Ascending aorta (tissue), 2 donors: ENCODE measurements at regions of chr11 and their contacts with region 1.

Region 1: GRCh38 chr11:69000831-69001242 is 12.2 kb downstream of the MRGPRF start:
- DNase-seq: peak in 1 of 2 donors; percentile 92
- H3K4me3 ChIP-seq: no peak overlapping the region
- H3K27ac ChIP-seq: peak overlapping the region; percentile 82 to 95
- H3K4me1 ChIP-seq: peaks cover 30 to 60% of the 10 kb centered on the region in 2 donors
- H3K27me3 ChIP-seq: no peaks in the 10 kb centered on the region
- CTCF ChIP-seq: peak; percentile 53 to 67 (median 66)

Region 2: DNA sequence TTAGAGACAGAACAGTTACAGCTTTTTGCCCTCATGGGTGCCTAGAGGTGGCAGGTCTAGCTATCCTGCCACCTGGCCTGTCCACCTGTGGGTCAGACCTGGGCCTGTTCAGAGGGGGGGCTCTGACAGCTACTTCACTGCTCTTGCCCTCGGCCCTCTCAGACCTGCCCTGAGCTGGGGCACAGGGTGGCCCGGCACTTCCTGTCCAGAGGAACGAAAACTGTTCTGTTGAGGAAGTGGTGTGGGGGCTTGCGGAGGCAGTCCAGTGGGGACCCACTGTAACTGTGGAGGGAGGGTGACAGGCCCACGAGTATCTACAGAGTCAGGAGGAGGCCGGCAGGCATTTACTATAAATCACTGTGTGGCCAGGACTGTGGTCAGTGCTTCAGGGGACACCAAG is 265.7 kb before region 1 on chr11:
- intact Hi-C with region 1: no loop called
- DNase-seq: no peak
- H3K4me3 ChIP-seq: no peak overlapping the region
- H3K27ac ChIP-seq: no peak overlapping the region
- H3K4me1 ChIP-seq: no peaks in the 10 kb centered on the region
- H3K27me3 ChIP-seq: no peaks in the 10 kb centered on the region
- CTCF ChIP-seq: no peak

Region 3: GRCh38 chr11:68924073-68924945 is 76.5 kb before region 1 on chr11:
- intact Hi-C with region 1: loop called (anchors 1 kb)
- DNase-seq: no peak
- H3K4me3 ChIP-seq: no peak overlapping the region
- H3K27ac ChIP-seq: peak overlapping the region; percentile 70 to 78
- H3K4me1 ChIP-seq: peaks cover 15 to 33% of the 10 kb centered on the region in 2 donors
- H3K27me3 ChIP-seq: no peaks in the 10 kb centered on the region
- CTCF ChIP-seq: no peak

Region 4: DNA sequence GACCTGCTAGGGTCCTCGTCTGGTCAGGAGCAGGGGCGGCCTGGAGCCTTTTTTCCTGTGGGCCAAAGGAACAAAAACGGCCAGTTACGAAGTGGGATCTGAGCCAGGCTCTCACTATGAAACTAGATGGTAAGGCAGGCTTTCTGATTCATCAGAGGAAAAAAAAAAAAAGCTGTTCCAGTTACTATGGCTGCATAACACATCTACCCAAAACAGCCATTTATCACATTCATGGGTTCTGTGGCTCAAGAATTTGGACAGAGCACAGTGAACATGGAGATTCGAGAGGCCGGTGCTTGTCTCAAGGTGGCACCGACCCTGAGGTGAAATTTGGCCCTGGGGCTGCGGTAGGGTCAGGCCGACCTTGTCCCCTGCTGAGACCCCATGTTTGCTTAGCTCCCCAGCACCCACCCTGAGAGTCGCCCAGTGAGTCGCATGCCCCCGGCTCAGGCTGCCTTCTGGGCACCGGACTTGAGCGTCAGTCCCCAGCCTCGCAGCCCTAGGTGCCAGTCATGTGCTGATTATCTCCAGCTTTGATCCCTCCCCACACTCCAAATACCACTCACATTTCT is 54.3 kb before region 1 on chr11:
- intact Hi-C with region 1: loop called (anchors 2 kb)
- DNase-seq: peak in 1 of 2 donors; percentile 82
- H3K4me3 ChIP-seq: peak overlapping the region; percentile 11 to 20
- H3K27ac ChIP-seq: peak overlapping the region; percentile 70 to 82
- H3K4me1 ChIP-seq: peaks cover 25 to 36% of the 10 kb centered on the region in 2 donors
- H3K27me3 ChIP-seq: no peaks in the 10 kb centered on the region
- CTCF ChIP-seq: no peak

Region 5: DNA sequence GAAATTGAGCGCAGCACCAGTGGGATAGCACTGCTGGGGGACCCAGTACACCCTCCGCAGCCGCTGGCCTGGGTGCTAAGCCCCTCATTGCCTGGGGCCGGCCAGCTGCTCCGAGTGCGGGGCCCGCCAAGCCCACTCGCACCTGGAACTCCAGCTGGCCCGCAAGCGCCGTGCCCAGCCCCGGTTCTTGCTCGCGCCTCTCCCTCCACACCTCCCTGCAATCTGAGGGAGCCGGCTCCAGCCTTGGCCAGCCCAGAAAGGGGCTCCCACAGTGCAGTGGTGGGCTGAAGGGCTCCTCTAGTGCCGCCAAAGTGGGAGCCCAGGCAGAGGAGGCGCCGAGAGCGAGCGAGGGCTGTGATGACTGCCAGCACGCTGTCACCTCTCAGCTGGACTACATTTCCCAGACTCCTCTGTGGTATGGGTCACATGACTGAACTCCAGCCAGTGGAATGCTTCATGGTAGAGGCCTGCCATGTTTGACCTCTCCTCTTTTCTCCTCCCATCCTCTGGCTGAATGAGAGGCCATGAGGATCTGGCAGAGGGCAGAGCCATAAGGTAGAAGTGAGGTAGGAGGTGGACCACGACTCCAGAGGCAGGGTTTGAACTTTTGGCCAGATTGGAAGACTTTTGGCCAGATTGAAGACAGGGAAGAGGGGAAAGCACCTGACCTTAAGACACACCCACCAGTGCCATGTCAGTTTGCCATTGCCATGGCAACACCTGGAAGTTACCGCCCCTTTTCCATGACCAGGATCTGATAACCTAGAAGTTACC is 26.2 kb before region 1 on chr11:
- intact Hi-C with region 1: no loop called
- DNase-seq: peak in 1 of 2 donors; percentile 49
- H3K4me3 ChIP-seq: no peak overlapping the region
- H3K27ac ChIP-seq: no peak overlapping the region
- H3K4me1 ChIP-seq: no peaks in the 10 kb centered on the region
- H3K27me3 ChIP-seq: no peaks in the 10 kb centered on the region
- CTCF ChIP-seq: no peak

Region 6: DNA sequence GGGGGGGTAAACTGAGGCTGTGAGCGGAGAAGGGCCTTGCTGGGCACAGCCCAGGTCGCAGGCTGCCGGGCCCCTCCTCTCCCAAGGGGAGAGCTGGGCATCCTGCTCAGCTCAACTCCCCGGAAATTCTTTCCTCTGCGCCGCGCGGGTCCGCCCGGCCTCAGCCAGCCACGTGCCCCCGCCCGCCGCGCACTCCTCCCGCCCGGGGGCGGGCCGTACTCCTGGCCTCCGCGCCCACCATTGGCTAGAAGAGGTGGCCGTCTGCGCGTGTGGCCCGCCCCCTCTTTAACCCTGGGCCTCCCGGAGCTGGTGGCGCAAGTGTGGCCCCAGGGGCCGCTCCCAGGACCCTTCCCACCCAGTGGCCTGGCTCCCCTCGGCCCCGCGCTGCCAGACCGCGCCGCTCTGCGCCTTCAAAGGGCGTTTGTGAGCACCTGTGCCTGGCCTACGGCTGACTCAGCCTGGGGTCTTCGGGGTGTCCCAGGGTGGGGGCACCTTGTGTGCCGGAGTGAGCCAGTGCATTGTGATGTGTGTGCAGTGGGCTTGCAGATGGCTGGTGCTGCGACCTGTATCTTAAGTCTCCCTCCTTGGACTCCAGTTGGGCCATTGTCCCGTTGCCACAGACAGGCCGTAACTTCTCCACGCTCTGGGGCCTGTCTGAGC is 10.3 kb after region 1 on chr11:
- intact Hi-C with region 1: loop called (anchors 1 kb)
- DNase-seq: peak in 1 of 2 donors; percentile 91
- H3K4me3 ChIP-seq: peak overlapping the region; percentile 75 to 84
- H3K27ac ChIP-seq: peak overlapping the region; percentile 93 to 95
- H3K4me1 ChIP-seq: peaks cover 18 to 49% of the 10 kb centered on the region in 2 donors
- H3K27me3 ChIP-seq: no peaks in the 10 kb centered on the region
- CTCF ChIP-seq: no peak

Region 7: DNA sequence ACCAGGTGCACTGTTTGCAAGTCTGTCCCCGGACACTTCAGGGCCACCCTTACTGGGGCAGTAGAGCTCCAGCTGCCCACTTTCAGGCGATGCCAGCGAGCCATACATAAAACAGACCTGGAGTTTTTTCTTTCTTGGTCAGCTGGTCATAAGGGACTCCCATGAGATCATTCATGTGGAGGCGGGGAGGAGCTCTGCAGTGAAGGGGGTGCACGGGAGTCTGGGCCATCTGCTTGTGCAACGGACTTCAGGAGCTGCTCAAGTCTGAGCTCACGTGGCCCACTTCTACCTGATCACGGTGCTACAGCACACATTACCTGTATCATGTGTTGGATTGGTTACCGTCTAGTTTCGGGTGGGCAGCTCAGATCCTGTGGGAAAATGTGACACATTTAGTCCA is 21.4 kb after region 1 on chr11:
- intact Hi-C with region 1: no loop called
- DNase-seq: no peak
- H3K4me3 ChIP-seq: no peak overlapping the region
- H3K27ac ChIP-seq: no peak overlapping the region
- H3K4me1 ChIP-seq: peaks cover 3 to 5% of the 10 kb centered on the region in 2 donors
- H3K27me3 ChIP-seq: no peaks in the 10 kb centered on the region
- CTCF ChIP-seq: no peak

Region 8: DNA sequence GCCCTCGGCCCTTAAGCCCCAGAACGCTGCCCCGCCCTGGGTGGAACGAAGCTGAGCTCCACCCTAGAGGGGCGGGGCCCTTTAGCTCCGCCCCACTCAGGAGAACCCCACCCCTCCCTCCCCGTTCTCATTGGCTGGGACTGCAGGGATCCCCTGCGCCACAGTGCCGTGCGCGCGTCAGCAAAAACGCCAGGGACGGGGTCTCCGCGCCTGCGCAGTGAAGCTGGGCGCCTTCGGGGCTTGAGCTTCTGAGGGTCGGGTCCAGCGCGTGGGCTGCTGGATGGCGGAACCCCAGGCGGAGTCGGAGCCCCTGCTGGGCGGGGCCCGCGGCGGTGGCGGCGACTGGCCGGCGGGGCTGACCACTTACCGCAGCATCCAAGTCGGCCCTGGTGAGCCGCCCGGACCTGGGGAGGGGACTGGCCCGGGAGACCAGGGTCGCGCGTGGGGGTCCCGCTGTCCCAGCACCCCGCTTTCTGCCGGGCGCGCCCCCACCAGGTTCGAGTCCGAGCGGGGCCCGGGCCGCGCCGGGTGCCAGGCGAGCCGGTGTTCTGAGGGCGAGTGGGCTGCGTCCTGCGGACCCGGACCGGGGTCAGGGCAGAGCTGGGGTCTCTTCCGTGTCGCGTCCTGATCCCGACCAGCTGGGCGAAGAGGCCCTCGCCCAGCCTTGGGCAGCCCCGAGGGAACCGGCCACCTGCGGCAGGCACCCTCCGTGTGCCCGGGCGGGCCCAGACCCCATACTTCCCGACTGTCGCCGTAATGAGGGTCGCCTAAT is 48.1 kb after region 1 on chr11 and contains the start of gene TPCN2:
- intact Hi-C with region 1: loop called (anchors 2 kb)
- DNase-seq: peak; percentile 65 to 95
- H3K4me3 ChIP-seq: peak within 1 kb of the TSS; percentile 69 to 97
- H3K27ac ChIP-seq: peak within 1 kb of the TSS; percentile 74 to 93
- H3K4me1 ChIP-seq: peaks cover 6 to 23% of the 10 kb centered on the region in 2 donors
- H3K27me3 ChIP-seq: no peaks in the 10 kb centered on the region
- CTCF ChIP-seq: no peak
- total RNA-seq, gene TPCN2: 24.9 TPM

Region 9: GRCh38 chr11:69075421-69076128 is 74.7 kb after region 1 on chr11:
- intact Hi-C with region 1: no loop called
- DNase-seq: peak; percentile 24 to 94
- H3K4me3 ChIP-seq: no peak overlapping the region
- H3K27ac ChIP-seq: peak overlapping the region; percentile 21 to 62
- H3K4me1 ChIP-seq: peaks cover 0 to 8% of the 10 kb centered on the region in 2 donors
- H3K27me3 ChIP-seq: no peaks in the 10 kb centered on the region
- CTCF ChIP-seq: no peak

Region 10: GRCh38 chr11:69088676-69089146 is 87.9 kb after region 1 on chr11:
- intact Hi-C with region 1: loop called (anchors 5 kb)
- DNase-seq: peak in 1 of 2 donors; percentile 79
- H3K4me3 ChIP-seq: no peak overlapping the region
- H3K27ac ChIP-seq: no peak overlapping the region
- H3K4me1 ChIP-seq: no peaks in the 10 kb centered on the region
- H3K27me3 ChIP-seq: no peaks in the 10 kb centered on the region
- CTCF ChIP-seq: peak; percentile 64 to 82 (median 74)

Region 11: GRCh38 chr11:69296890-69297786 is 296.3 kb after region 1 on chr11:
- intact Hi-C with region 1: loop called (anchors 10 kb)
- DNase-seq: peak; percentile 85 to 98
- H3K4me3 ChIP-seq: peak overlapping the region in 1 of 2 donors; percentile 39
- H3K27ac ChIP-seq: peak overlapping the region; percentile 85 to 93
- H3K4me1 ChIP-seq: peaks cover 25 to 36% of the 10 kb centered on the region in 2 donors
- H3K27me3 ChIP-seq: no peaks in the 10 kb centered on the region
- CTCF ChIP-seq: no peak